HCT116 (cell line): ENCODE measurements at regions of chr1 and their contacts with region 1.

Region 1: GRCh38 chr1:108963052-108963686 is at the start of gene CLCC1:
- DNase-seq: peak; percentile 80
- ATAC-seq: peak; percentile 94
- H3K4me3 ChIP-seq: peak within 1 kb of the TSS; percentile 77 to 87
- H3K27ac ChIP-seq: peak within 1 kb of the TSS; percentile 95
- H3K4me1 ChIP-seq: peaks cover 4 to 16% of the 10 kb centered on the region in 2 experiments; a peak in 3 of 4 replicates
- H3K27me3 ChIP-seq: no peaks in the 10 kb centered on the region
- CTCF ChIP-seq: no peak
- POLR2A ChIP-seq: peak; percentile 92
- RAD21 ChIP-seq: no peak; the same call in 1 of the 2 replicates
- total RNA-seq, gene CLCC1: 14.3 TPM

Region 2: GRCh38 chr1:108708691-108709660 is 254.2 kb before region 1 on chr1:
- CTCF ChIA-PET with region 1: no interaction called
- POLR2A ChIA-PET with region 1: no interaction called
- RAD21 ChIA-PET with region 1: no interaction called
- intact Hi-C with region 1: no loop called
- DNase-seq: no peak
- ATAC-seq: peak; percentile 87
- H3K4me3 ChIP-seq: no peak overlapping the region
- H3K27ac ChIP-seq: no peak overlapping the region
- H3K4me1 ChIP-seq: peaks cover 5 to 10% of the 10 kb centered on the region in 2 experiments
- H3K27me3 ChIP-seq: no peaks in the 10 kb centered on the region
- CTCF ChIP-seq: peak in 2 of 3 experiments; percentile 42 to 48; a peak in 3 of 6 replicates
- POLR2A ChIP-seq: no peak
- RAD21 ChIP-seq: peak; percentile 35; the same call in 1 of the 2 replicates

Region 3: GRCh38 chr1:108933944-108934343 is 29.2 kb before region 1 on chr1:
- CTCF ChIA-PET with region 1: no interaction called
- POLR2A ChIA-PET with region 1: no interaction called
- RAD21 ChIA-PET with region 1: no interaction called
- intact Hi-C with region 1: no loop called
- DNase-seq: no peak
- ATAC-seq: no peak
- H3K4me3 ChIP-seq: no peak overlapping the region
- H3K27ac ChIP-seq: no peak overlapping the region
- H3K4me1 ChIP-seq: no peaks in the 10 kb centered on the region
- H3K27me3 ChIP-seq: no peaks in the 10 kb centered on the region
- CTCF ChIP-seq: no peak
- POLR2A ChIP-seq: no peak
- RAD21 ChIP-seq: no peak

Region 4: DNA sequence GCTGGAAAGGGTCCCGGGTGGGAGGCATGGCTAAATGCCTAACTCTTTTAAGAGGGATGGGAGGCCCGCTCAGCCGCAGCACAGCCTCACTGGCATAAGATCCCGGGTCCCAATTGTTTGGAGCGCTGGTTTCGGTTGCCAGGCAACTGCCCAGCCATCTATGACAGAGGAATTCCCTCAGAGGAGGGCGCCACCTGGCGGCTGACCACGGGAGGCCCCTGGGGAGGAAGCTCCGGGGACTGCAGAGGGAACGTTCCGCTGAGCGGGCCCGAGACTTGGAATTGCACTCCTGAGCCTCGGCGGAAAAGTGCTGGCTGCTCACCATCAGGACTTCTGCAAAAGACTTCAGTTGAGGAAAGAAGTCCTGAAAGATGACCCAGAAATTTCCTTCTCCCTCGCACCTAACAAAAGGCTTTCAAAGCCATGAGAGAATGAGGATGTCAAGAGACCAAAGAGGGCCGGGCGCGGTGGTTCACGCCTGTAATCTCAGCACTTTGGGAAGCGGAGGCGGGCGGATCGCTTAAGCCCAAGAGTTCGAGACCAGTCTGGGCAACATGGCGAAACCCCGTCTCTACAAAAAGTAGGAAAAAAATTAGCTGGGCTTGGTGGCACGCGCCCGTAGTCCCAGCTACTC is 149.6 kb after region 1 on chr1:
- CTCF ChIA-PET with region 1: no interaction called
- POLR2A ChIA-PET with region 1: no interaction called
- RAD21 ChIA-PET with region 1: no interaction called
- intact Hi-C with region 1: loop called (anchors 5 kb)
- DNase-seq: peak; percentile 80
- ATAC-seq: peak; percentile 97
- H3K4me3 ChIP-seq: no peak overlapping the region
- H3K27ac ChIP-seq: no peak overlapping the region
- H3K4me1 ChIP-seq: peaks cover 3 to 16% of the 10 kb centered on the region in 2 experiments; a peak in 3 of 4 replicates
- H3K27me3 ChIP-seq: no peaks in the 10 kb centered on the region
- CTCF ChIP-seq: peak; percentile 79 to 96 (median 96)
- POLR2A ChIP-seq: no peak
- RAD21 ChIP-seq: peak; percentile 82